Heart left ventricle (tissue), 16 donors: ENCODE measurements at regions of chr17 and their contacts with region 1.

Region 1: DNA sequence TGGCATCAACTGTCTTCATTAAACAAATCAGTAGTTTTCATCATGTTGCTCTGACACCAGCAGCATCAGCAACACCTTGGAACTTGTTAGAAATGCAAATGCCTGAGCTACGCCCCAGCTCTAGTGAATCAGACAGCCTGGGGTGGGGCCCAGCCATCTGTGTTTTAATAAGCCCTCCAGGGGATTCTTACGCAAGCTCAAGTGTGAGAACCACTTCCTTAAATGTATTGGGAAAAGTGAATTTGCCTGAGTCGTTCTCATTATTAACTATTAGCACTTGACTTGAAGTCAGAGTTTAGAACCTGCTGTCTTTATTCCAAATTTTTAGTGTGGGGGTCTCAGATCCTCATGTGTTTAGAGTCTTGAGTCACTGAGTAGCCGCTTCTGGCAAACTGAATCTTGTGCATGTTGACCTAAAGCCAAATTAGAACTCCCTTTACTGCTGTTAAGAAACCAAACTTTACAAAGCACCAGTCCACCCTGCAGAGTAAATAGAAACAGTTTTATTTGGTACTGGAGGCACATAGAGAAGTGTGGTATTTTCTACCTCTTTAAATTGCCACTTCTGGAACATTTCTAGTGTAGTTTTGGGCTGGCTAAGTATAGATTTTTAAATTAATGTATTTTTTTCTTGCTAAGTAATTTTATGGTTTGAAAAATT is 137.4 kb upstream of the COX10 start:
- DNase-seq: peak; percentile 71 to 79 (median 74)
- ATAC-seq: peak; percentile 76 to 95 (median 92)
- H3K4me3 ChIP-seq: no peak overlapping the region
- H3K27ac ChIP-seq: peak overlapping the region; percentile 31 to 88 (median 56)
- H3K4me1 ChIP-seq: peaks cover 0 to 33% (median 0%) of the 10 kb centered on the region in 12 donors
- H3K27me3 ChIP-seq: no peaks in the 10 kb centered on the region
- CTCF ChIP-seq: no peak
- POLR2A ChIP-seq: no peak

Region 2: GRCh38 chr17:13995856-13996271 is 63.9 kb after region 1 on chr17:
- intact Hi-C with region 1: loop called in 1 of 10 experiments (anchors 10 kb)
- DNase-seq: no peak
- ATAC-seq: no peak
- H3K4me3 ChIP-seq: no peak overlapping the region
- H3K27ac ChIP-seq: no peak overlapping the region
- H3K4me1 ChIP-seq: no peaks in the 10 kb centered on the region
- H3K27me3 ChIP-seq: no peaks in the 10 kb centered on the region
- CTCF ChIP-seq: no peak
- POLR2A ChIP-seq: no peak

Region 3: GRCh38 chr17:14011740-14012405 is 79.9 kb after region 1 on chr17:
- intact Hi-C with region 1: no loop called
- DNase-seq: peak in 3 of 5 donors; percentile 27 to 47 (median 30)
- ATAC-seq: peak in 1 of 4 donors; percentile 49
- H3K4me3 ChIP-seq: no peak overlapping the region
- H3K27ac ChIP-seq: no peak overlapping the region
- H3K4me1 ChIP-seq: peaks cover 0 to 10% (median 0%) of the 10 kb centered on the region in 12 donors
- H3K27me3 ChIP-seq: peaks cover 0 to 17% (median 0%) of the 10 kb centered on the region in 9 donors
- CTCF ChIP-seq: no peak
- POLR2A ChIP-seq: no peak